Common myeloid progenitor, CD34-positive (primary cell): ENCODE measurements at regions of chr4 and their contacts with region 1.

Region 1: DNA sequence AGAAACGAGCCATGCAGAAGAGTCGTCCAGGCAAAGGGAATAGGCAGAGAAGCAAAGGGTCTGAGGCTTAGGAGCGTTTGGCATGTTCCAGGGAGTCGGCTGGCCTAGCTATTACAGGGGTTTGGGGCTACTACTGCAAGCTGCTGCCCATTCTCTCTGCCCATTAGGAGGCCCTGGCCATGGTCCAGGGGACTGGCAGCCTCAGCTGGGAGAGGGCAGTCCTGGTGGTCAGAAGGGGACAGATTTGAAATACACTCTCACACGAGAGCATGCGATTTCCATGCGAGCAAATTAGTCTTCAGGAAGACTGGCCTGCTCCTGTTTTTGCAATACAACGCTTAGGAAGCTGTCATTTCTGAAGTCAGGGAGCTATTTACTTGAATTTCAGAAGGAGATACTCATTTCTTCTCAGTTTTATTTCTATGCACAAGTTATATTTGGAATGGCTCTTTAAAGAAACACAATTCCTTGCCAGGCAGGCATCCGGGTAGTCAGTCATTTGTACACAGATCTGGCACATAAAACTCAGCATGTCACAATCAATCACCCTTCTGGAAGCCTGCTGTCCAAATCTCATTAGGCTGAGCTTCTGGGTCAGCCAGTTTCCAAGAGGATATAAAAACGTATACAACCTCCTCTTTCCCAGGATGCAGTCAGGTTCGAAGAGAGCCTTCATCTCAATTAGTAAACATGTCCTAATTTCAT is 27.0 kb downstream of the PROM1 start:
- DNase-seq: no peak
- H3K4me3 ChIP-seq: peak overlapping the region in 3 of 7 experiments; percentile 20 to 53 (median 23)
- H3K27ac ChIP-seq: peak overlapping the region; percentile 97
- H3K4me1 ChIP-seq: peaks cover 29 to 93% (median 78%) of the 10 kb centered on the region in 4 experiments
- H3K27me3 ChIP-seq: no peaks in the 10 kb centered on the region

Region 2: DNA sequence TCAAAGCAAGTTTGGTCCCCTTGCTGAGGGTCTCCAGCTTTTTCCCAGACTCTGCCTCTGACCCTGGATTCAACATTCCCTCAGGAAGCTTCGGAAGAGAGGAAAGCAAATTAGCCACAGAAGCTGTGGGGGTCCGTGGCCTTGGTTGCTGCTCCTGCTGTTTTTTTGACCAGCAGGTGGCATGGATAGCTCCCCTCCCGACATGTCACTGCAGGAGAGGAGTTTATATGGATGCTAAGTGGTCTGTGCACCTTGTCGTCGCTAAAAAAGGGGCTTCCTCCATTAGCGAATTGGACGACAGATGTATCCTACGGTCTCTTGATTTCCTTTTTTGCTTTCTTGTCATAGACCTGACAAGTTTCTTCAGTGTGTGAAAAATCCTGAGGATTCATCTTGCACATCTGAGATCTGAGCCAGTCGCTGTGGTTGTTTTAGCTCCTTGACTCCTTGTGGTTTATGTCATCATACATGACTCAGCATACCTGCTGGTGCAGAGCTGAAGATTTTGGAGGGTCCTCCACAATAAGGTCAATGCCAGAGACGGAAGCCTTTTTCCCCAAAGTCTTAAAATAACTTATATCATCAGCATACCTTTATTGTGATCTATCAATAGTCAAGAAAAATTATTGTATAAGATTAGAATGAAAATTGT is 208.5 kb before region 1 on chr4:
- CTCF ChIA-PET with region 1: no interaction called
- POLR2A ChIA-PET with region 1: no interaction called
- DNase-seq: peak in 2 of 3 donors; percentile 31 to 46
- H3K4me3 ChIP-seq: no peak overlapping the region
- H3K27ac ChIP-seq: no peak overlapping the region
- H3K4me1 ChIP-seq: peaks cover 0 to 7% (median 0%) of the 10 kb centered on the region in 4 experiments
- H3K27me3 ChIP-seq: no peaks in the 10 kb centered on the region

Region 3: DNA sequence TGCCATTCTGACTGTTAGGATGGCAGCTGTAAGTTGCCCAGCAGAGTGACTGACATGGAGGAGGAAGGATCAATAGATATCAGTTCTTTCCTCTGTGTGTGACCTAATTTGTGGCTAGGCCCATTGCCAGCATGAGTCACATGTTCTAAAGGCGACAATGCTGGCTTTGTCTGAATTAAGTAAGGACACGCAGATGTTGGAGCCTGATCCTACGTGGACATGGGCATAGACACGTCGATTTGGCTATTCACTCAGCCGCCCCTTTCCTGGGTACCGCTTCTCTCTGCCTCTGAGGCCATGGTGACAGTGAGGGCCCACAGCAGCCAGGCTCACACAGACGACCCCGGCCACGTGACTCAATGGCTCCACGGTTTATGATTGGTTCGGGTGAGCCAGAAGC is 10.7 kb after region 1 on chr4:
- CTCF ChIA-PET with region 1: interaction called, 31 read pairs
- POLR2A ChIA-PET with region 1: interaction called, 5 read pairs
- DNase-seq: peak; percentile 59 to 63 (median 60)
- H3K4me3 ChIP-seq: no peak overlapping the region
- H3K27ac ChIP-seq: peak overlapping the region; percentile 19 to 25
- H3K4me1 ChIP-seq: peaks cover 6 to 71% (median 56%) of the 10 kb centered on the region in 4 experiments
- H3K27me3 ChIP-seq: no peaks in the 10 kb centered on the region

Region 4: GRCh38 chr4:16082426-16083240 is 25.8 kb after region 1 on chr4:
- CTCF ChIA-PET with region 1: interaction called, 25 read pairs
- POLR2A ChIA-PET with region 1: interaction called, 9 read pairs
- DNase-seq: peak; percentile 35 to 71 (median 59)
- H3K4me3 ChIP-seq: peak overlapping the region; percentile 65 to 99 (median 92)
- H3K27ac ChIP-seq: peak overlapping the region; percentile 66 to 82
- H3K4me1 ChIP-seq: peaks cover 2 to 64% (median 53%) of the 10 kb centered on the region in 4 experiments
- H3K27me3 ChIP-seq: no peaks in the 10 kb centered on the region

Region 5: DNA sequence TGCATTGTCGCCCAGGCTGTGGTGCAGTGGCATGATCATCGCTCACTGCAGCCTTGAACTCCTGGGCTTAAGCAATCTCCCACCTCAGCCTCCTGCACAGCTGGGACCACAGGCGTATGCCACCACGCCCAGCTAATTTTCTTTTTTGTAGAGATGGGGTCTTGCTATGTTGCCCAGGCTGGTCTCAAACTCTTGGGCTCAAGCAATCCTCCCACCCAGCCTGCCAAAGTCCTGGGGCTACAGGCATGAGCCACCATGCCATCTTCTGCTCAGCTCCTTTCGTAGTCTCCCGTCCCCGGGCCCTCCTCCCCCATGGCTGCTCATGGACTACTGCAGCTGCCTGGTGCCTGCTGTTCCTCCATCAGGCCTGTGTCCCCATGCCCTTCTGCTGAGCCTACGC is 111.3 kb after region 1 on chr4:
- CTCF ChIA-PET with region 1: no interaction called
- POLR2A ChIA-PET with region 1: no interaction called
- DNase-seq: no peak
- H3K4me3 ChIP-seq: no peak overlapping the region
- H3K27ac ChIP-seq: no peak overlapping the region
- H3K4me1 ChIP-seq: peaks cover 0 to 3% (median 0%) of the 10 kb centered on the region in 4 experiments
- H3K27me3 ChIP-seq: no peaks in the 10 kb centered on the region

Region 6: DNA sequence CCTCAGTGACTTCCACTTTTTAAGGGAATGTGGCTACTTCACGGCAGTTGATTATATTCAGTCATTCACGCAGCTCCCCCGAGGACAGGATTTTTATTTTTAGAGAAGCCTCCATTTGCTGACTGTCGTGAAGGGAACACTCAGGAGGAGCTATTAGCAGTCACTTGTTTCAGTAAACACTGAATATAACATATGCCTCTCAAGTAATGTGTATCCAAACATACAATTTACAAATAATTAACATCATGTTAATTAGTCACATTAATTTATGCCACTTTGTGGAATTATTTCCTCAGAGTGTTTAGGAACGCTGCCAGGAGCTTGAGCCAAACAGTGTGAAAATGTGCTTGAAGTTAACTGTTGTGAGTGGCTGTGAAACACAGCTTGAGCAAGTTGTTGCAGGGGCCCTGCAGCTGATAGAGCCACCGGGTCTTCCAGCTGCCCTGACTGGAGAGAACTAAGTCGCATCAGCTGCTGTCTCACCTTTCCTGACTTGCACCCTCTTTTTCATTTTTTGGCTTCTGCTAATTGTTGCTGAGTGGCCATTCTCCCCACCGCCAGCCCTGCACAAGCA is 596.0 kb after region 1 on chr4:
- CTCF ChIA-PET with region 1: no interaction called
- POLR2A ChIA-PET with region 1: no interaction called
- DNase-seq: no peak
- H3K4me3 ChIP-seq: no peak overlapping the region
- H3K27ac ChIP-seq: no peak overlapping the region
- H3K4me1 ChIP-seq: no peaks in the 10 kb centered on the region
- H3K27me3 ChIP-seq: no peaks in the 10 kb centered on the region